Heart right ventricle (tissue), 16 donors: ENCODE measurements at regions of chr2 and their contacts with region 1.

Region 1: GRCh38 chr2:240143801-240144648 is 3.6 kb upstream of the OTOS start:
- DNase-seq: peak; percentile 60 to 74
- ATAC-seq: peak; percentile 76 to 87 (median 84)
- H3K4me3 ChIP-seq: no peak overlapping the region
- H3K27ac ChIP-seq: no peak overlapping the region
- H3K4me1 ChIP-seq: peaks cover 0 to 7% (median 0%) of the 10 kb centered on the region in 9 donors
- H3K27me3 ChIP-seq: peaks cover 0 to 56% (median 23%) of the 10 kb centered on the region in 7 donors
- CTCF ChIP-seq: peak; percentile 80 to 97 (median 95)

Region 2: GRCh38 chr2:239049421-239050251 is 1094.4 kb before region 1 on chr2:
- intact Hi-C with region 1: loop called in 1 of 10 experiments (anchors 10 kb)
- DNase-seq: no peak
- ATAC-seq: no peak
- H3K4me3 ChIP-seq: no peak overlapping the region
- H3K27ac ChIP-seq: no peak overlapping the region
- H3K4me1 ChIP-seq: peaks cover 0 to 10% (median 0%) of the 10 kb centered on the region in 9 donors
- H3K27me3 ChIP-seq: no peaks in the 10 kb centered on the region
- CTCF ChIP-seq: no peak

Region 3: GRCh38 chr2:240053173-240054155 is 90.6 kb before region 1 on chr2 and contains the start of gene OR6B3:
- intact Hi-C with region 1: loop called in 1 of 10 experiments (anchors 5 kb)
- DNase-seq: no peak
- ATAC-seq: no peak
- H3K4me3 ChIP-seq: no peak within 1 kb of the TSS
- H3K27ac ChIP-seq: no peak within 1 kb of the TSS
- H3K4me1 ChIP-seq: no peaks in the 10 kb centered on the region
- H3K27me3 ChIP-seq: peaks cover 0 to 92% (median 70%) of the 10 kb centered on the region in 7 donors
- CTCF ChIP-seq: no peak
- total RNA-seq, gene OR6B3: not detected

Region 4: DNA sequence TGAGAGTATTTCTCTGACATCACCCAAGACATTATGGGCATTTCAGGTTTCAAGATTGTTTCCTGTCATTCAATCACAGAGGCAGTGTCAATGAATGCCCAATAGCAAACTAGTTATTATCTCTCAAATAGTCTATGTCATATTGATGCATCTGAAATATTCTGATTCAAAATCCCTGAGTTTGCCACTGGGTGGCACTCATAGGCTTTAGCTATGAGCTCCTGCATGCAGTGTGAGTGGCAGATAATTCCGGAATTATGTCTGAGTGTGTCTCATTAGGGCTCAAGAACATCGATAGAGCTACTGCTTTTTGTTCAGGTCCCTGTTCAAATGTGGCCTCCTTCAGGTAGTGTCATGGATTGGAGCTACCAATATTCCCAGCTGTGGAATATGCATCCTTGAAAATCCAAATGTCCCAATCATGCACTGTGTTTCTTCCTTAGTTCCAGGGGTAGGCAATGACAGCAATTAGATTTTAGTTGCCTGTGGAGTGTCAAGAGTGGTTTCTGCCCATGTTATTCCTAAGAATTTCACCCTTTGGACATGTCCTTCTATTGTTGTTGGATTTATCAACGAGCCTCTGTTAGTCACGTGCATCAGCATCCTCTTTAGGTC is 82.9 kb before region 1 on chr2:
- intact Hi-C with region 1: loop called (anchors 1 to 2 kb)
- DNase-seq: no peak
- ATAC-seq: peak in 4 of 8 donors; percentile 35 to 65 (median 55)
- H3K4me3 ChIP-seq: no peak overlapping the region
- H3K27ac ChIP-seq: no peak overlapping the region
- H3K4me1 ChIP-seq: no peaks in the 10 kb centered on the region
- H3K27me3 ChIP-seq: peaks cover 0 to 46% (median 27%) of the 10 kb centered on the region in 7 donors
- CTCF ChIP-seq: peak in 8 of 9 donors; percentile 41 to 71 (median 62)

Region 5: GRCh38 chr2:240066487-240066886 is 77.5 kb before region 1 on chr2:
- intact Hi-C with region 1: loop called (anchors 1 to 2 kb)
- DNase-seq: no peak
- ATAC-seq: no peak
- H3K4me3 ChIP-seq: no peak overlapping the region
- H3K27ac ChIP-seq: no peak overlapping the region
- H3K4me1 ChIP-seq: no peaks in the 10 kb centered on the region
- H3K27me3 ChIP-seq: peaks cover 0 to 12% (median 10%) of the 10 kb centered on the region in 7 donors
- CTCF ChIP-seq: no peak

Region 6: DNA sequence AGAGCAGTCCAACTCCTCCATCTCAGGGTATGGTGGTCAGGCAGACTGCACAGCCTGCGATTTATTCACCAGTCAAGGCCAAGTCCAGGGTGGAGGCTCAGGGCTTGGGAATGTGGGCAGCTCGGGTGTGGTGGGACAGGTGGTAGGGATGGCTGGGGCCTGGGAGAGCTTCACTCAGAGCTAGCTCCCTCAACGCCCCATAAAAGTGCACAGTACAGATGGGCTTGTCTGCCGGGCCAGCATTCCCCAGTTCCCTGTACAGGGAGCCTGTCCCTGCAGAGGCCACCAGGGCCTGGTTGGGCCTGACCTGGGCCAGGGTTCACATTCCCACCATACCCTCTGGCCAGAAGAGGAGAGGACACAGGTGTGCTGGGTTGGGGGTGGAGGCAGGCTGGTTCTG is 45.7 kb after region 1 on chr2:
- intact Hi-C with region 1: no loop called
- DNase-seq: no peak
- ATAC-seq: no peak
- H3K4me3 ChIP-seq: no peak overlapping the region
- H3K27ac ChIP-seq: no peak overlapping the region
- H3K4me1 ChIP-seq: no peaks in the 10 kb centered on the region
- H3K27me3 ChIP-seq: peaks cover 0 to 42% (median 9%) of the 10 kb centered on the region in 7 donors
- CTCF ChIP-seq: no peak

Region 7: DNA sequence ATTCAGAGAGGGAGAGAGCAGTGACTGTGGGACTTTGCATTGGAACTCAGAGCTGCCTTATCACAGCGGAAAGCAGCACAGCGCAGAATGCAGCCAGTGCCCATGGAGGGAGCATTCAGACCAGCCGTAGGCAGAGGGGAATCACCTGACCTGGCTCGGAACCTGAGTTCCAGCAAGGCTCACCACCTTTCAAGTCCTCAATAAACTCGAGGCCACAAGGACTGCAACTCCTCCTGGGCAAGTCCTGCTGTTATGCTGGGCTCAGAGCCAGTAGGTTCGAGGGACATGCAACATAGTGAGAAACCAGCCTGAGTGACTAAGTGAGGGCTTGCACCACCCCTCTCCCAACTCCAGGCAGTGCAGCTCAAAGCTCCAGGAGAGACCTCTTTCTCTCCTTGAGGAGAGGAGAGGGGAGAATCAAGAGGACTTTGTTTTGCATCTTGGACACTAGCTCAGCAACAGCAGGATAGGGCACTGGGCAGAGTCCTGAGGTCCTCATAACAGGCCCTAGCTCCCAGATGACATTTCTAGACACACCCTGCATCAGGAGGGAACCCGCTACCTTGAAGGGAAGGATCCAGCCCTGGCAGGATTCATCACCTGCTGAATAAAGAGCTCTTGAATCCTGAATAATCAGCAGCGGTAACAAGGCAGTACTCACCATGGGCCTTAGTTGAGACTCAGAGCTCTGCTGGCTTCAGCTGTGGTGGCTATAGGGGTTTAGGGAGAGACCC is 133.2 kb after region 1 on chr2:
- intact Hi-C with region 1: no loop called
- DNase-seq: peak in 1 of 2 donors; percentile 5
- ATAC-seq: peak in 3 of 8 donors; percentile 48 to 65 (median 64)
- H3K4me3 ChIP-seq: no peak overlapping the region
- H3K27ac ChIP-seq: no peak overlapping the region
- H3K4me1 ChIP-seq: peaks cover 0 to 21% (median 6%) of the 10 kb centered on the region in 9 donors
- H3K27me3 ChIP-seq: peaks cover 0 to 3% (median 0%) of the 10 kb centered on the region in 7 donors
- CTCF ChIP-seq: no peak